Tibial artery (tissue), 4 donors: ENCODE measurements at regions of chr12 and their contacts with region 1.

Region 1: GRCh38 chr12:9607716-9608115 is at the start of gene KLRB1:
- DNase-seq: no peak
- H3K4me3 ChIP-seq: no peak within 1 kb of the TSS
- H3K27ac ChIP-seq: no peak within 1 kb of the TSS
- H3K4me1 ChIP-seq: no peaks in the 10 kb centered on the region
- H3K27me3 ChIP-seq: no peaks in the 10 kb centered on the region
- CTCF ChIP-seq: no peak

Region 2: DNA sequence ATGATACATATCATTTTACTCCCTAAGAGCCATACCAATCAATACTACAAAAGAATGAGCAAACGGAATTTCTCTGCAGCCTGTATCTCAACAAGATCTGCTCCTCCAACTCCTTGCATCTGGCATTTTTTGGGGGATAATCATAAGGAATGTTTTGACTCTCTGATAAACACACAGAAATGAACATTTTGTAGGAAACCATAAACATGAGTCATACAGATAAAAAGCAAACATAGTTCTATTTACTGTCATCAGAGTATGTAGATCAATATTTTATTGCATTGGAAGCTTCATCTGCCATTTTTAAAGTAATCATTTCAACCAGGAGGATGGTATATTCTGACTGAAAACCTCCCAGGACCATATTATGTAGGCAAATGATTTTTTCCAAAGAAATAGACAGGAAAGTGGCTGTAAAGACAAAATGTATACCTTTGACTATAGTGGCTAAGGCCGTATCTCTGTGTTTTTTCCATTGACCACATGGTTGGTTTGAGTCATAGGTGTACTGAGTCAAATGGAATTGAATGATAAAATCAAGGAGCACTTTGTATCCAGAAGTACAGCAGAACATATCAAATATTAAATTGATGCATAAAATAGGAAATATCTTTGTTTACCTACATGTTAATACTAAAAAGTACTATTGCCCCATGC is 185.4 kb after region 1 on chr12:
- intact Hi-C with region 1: loop called (anchors 5 kb)
- DNase-seq: no peak
- H3K4me3 ChIP-seq: no peak overlapping the region
- H3K27ac ChIP-seq: no peak overlapping the region
- H3K4me1 ChIP-seq: no peaks in the 10 kb centered on the region
- H3K27me3 ChIP-seq: no peaks in the 10 kb centered on the region
- CTCF ChIP-seq: no peak